ENCODE measurements at regions of chr14 and their contacts with region 1.

Region 1: GRCh38 chr14:23120541-23121251 is 1.6 kb upstream of the CEBPE start:
- DNase-seq: peak; percentile 91
- H3K4me3 ChIP-seq: no peak overlapping the region
- H3K27ac ChIP-seq: no peak overlapping the region
- H3K4me1 ChIP-seq: no peaks in the 10 kb centered on the region
- H3K27me3 ChIP-seq: no peaks in the 10 kb centered on the region
- CTCF ChIP-seq: peak; percentile 100

Region 2: DNA sequence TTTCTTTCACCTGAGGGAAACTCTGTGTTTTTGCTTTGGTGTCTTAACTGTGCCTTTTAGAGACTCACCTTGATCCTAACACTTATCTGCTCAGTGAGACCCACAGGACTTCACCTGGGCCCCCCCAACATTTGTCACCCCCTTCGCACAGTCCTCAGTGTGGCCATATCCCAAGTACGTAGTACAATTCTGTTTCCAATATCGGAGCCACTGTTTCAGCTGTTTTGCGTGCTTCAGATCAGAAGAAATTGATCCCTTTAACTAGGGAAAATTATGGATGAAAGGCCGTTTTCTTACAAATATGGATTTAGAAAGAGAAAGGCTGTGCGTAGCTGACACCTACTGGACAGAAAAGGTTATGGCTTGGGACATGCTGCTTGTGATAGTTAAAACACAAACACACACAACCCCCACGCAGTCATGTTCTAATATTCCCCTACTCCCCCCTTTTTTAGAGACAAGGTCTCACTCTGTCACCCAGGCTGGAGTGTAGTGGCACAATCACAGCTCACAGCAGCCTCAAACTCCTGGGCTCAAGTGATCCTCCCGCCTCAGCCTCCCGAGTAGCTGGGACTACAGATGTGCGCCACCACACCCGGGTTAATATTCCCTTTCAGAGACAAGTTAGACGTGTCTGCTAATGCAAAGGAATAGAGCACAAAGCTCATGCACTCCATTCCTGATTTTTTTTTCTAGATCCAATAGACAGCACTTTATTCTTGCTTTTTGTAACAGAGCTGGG is 66.4 kb after region 1 on chr14:
- intact Hi-C with region 1: loop called (anchors 1 kb)
- DNase-seq: no peak
- H3K4me3 ChIP-seq: no peak overlapping the region
- H3K27ac ChIP-seq: no peak overlapping the region
- H3K4me1 ChIP-seq: no peaks in the 10 kb centered on the region
- H3K27me3 ChIP-seq: no peaks in the 10 kb centered on the region
- CTCF ChIP-seq: peak; percentile 65

Region 3: DNA sequence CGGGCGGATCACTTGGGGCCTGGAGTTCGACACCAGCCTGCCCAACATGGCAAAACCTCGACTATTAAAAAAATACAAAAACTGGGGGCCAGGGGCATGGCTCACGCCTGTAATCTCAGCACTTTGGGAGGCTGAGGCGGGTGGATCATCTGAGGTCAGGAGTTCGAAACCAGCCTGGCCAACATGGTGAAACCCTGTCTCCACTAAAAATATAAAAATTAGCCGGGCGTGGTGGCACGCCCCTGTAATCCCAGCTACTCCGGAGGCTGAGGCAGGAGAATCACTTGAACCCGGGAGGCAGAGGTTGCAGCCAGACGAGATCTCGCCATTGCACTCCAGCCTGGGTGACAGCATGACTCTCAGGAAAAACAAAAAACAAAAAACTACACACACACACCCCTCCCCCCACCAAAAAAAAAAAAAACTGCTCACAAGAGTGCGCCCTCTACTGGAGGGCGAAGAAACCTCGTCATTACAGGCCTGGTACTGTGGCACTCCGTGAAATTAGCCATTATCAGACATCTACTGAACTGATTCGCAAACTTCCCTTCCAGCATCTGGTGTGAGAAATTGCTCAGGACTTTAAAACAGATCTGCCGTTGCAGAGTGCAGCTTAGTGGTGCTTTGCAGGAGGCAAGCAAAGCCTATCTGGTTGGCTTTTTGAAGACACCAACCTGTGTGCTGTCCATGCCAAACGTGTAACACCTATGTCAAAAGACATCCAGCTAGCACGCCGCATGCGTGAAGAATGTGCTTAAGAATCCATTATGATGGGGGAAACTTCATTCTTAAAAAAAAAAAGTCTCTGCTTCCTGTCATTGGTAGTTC is 174.3 kb after region 1 on chr14:
- intact Hi-C with region 1: loop called (anchors 10 kb)
- DNase-seq: peak; percentile 31
- H3K4me3 ChIP-seq: peak overlapping the region; percentile 9
- H3K27ac ChIP-seq: no peak overlapping the region
- H3K4me1 ChIP-seq: peaks cover 3% of the 10 kb centered on the region
- H3K27me3 ChIP-seq: no peaks in the 10 kb centered on the region
- CTCF ChIP-seq: peak; percentile 88

Measured in colonic mucosa (tissue), 4 donors.